Activated CD8-positive, alpha-beta T cell treated with anti-CD3 and anti-CD28 coated beads, Interleukin-2, amount 10 ng/mL, durations not matched to agents 7 days and 5 days (primary cell): ENCODE measurements at regions of chr17 and their contacts with region 1.

Region 1: GRCh38 chr17:4789901-4790704 is 1.3 kb downstream of the GLTPD2 start:
- DNase-seq: peak; percentile 85
- ATAC-seq: peak; percentile 95
- H3K4me3 Mint-ChIP-seq: peak overlapping the region; percentile 80
- H3K27ac Mint-ChIP-seq: peak overlapping the region; percentile 93
- H3K4me1 Mint-ChIP-seq: peaks cover 28% of the 10 kb centered on the region
- H3K27me3 Mint-ChIP-seq: peaks cover 39% of the 10 kb centered on the region

Region 2: GRCh38 chr17:4715063-4715744 is 74.9 kb before region 1 on chr17:
- CTCF ChIA-PET with region 1: interaction called, 37 read pairs
- POLR2A ChIA-PET with region 1: interaction called, 3 read pairs
- DNase-seq: peak; percentile 81
- ATAC-seq: peak; percentile 11
- H3K4me3 Mint-ChIP-seq: peak overlapping the region; percentile 81
- H3K27ac Mint-ChIP-seq: peak overlapping the region; percentile 94
- H3K4me1 Mint-ChIP-seq: peaks cover 74% of the 10 kb centered on the region
- H3K27me3 Mint-ChIP-seq: no peaks in the 10 kb centered on the region

Region 3: GRCh38 chr17:4747847-4748246 is 42.3 kb before region 1 on chr17:
- CTCF ChIA-PET with region 1: interaction called, 14 read pairs
- POLR2A ChIA-PET with region 1: interaction called, 3 read pairs
- DNase-seq: peak; percentile 63
- ATAC-seq: peak; percentile 88
- H3K4me3 Mint-ChIP-seq: peak overlapping the region; percentile 70
- H3K27ac Mint-ChIP-seq: peak overlapping the region; percentile 75
- H3K4me1 Mint-ChIP-seq: peaks cover 20% of the 10 kb centered on the region
- H3K27me3 Mint-ChIP-seq: peaks cover 24% of the 10 kb centered on the region

Region 4: GRCh38 chr17:4777969-4778761 is 11.9 kb before region 1 on chr17:
- CTCF ChIA-PET with region 1: interaction called, 25 read pairs
- POLR2A ChIA-PET with region 1: interaction called, 6 read pairs
- DNase-seq: no peak
- ATAC-seq: no peak
- H3K4me3 Mint-ChIP-seq: no peak overlapping the region
- H3K27ac Mint-ChIP-seq: no peak overlapping the region
- H3K4me1 Mint-ChIP-seq: no peaks in the 10 kb centered on the region
- H3K27me3 Mint-ChIP-seq: peaks cover 31% of the 10 kb centered on the region

Region 5: GRCh38 chr17:4886852-4887251 is 96.7 kb after region 1 on chr17:
- CTCF ChIA-PET with region 1: interaction called, 10 read pairs
- POLR2A ChIA-PET with region 1: no interaction called
- DNase-seq: no peak
- ATAC-seq: no peak
- H3K4me3 Mint-ChIP-seq: no peak overlapping the region
- H3K27ac Mint-ChIP-seq: no peak overlapping the region
- H3K4me1 Mint-ChIP-seq: no peaks in the 10 kb centered on the region
- H3K27me3 Mint-ChIP-seq: no peaks in the 10 kb centered on the region